PC-3 (cell line): ENCODE measurements at regions of chr4 and their contacts with region 1.

Region 1: GRCh38 chr4:39697740-39698423 is at the start of gene UBE2K:
- DNase-seq: peak; percentile 87
- ATAC-seq: peak; percentile 95
- H3K4me3 ChIP-seq: peak within 1 kb of the TSS; percentile 99
- H3K27ac ChIP-seq: peak within 1 kb of the TSS; percentile 83
- H3K4me1 ChIP-seq: peaks cover 13% of the 10 kb centered on the region
- H3K27me3 ChIP-seq: no peaks in the 10 kb centered on the region
- CTCF ChIP-seq: no peak
- total RNA-seq, gene UBE2K: 30.1 and 38.9 TPM in 2 replicates

Region 2: DNA sequence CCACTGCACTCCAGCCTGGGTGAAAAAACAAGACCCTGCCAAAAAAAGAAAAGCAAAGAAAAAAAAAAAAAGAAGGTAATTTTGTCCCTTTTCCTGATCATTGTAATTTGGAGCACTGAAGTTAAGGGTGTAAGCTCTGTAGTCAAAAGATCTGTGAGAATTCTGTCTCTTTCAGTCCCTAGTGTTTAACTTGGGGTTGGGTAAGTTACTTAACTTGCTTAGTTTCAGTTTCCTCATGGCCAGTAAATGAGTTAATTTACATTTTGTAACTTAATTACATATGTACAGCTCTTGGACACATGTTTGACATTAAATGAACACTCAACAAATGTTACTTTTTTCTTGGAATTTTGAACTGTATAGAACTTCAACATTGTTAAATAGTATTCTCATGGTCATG is 10.9 kb before region 1 on chr4:
- CTCF ChIA-PET with region 1: no interaction called
- POLR2A ChIA-PET with region 1: interaction called, 17 read pairs
- intact Hi-C with region 1: no loop called
- DNase-seq: no peak
- ATAC-seq: no peak
- H3K4me3 ChIP-seq: no peak overlapping the region
- H3K27ac ChIP-seq: no peak overlapping the region
- H3K4me1 ChIP-seq: no peaks in the 10 kb centered on the region
- H3K27me3 ChIP-seq: no peaks in the 10 kb centered on the region
- CTCF ChIP-seq: no peak

Region 3: GRCh38 chr4:39763714-39764572 is 66.1 kb after region 1 on chr4:
- CTCF ChIA-PET with region 1: no interaction called
- POLR2A ChIA-PET with region 1: interaction called, 13 read pairs
- intact Hi-C with region 1: no loop called
- DNase-seq: no peak
- ATAC-seq: no peak
- H3K4me3 ChIP-seq: no peak overlapping the region
- H3K27ac ChIP-seq: no peak overlapping the region
- H3K4me1 ChIP-seq: no peaks in the 10 kb centered on the region
- H3K27me3 ChIP-seq: no peaks in the 10 kb centered on the region
- CTCF ChIP-seq: no peak

Region 4: GRCh38 chr4:39823191-39823590 is 125.3 kb after region 1 on chr4:
- CTCF ChIA-PET with region 1: no interaction called
- POLR2A ChIA-PET with region 1: no interaction called
- intact Hi-C with region 1: loop called (anchors 10 kb)
- DNase-seq: no peak
- ATAC-seq: no peak
- H3K4me3 ChIP-seq: no peak overlapping the region
- H3K27ac ChIP-seq: no peak overlapping the region
- H3K4me1 ChIP-seq: peaks cover 17% of the 10 kb centered on the region
- H3K27me3 ChIP-seq: no peaks in the 10 kb centered on the region
- CTCF ChIP-seq: no peak

Region 5: DNA sequence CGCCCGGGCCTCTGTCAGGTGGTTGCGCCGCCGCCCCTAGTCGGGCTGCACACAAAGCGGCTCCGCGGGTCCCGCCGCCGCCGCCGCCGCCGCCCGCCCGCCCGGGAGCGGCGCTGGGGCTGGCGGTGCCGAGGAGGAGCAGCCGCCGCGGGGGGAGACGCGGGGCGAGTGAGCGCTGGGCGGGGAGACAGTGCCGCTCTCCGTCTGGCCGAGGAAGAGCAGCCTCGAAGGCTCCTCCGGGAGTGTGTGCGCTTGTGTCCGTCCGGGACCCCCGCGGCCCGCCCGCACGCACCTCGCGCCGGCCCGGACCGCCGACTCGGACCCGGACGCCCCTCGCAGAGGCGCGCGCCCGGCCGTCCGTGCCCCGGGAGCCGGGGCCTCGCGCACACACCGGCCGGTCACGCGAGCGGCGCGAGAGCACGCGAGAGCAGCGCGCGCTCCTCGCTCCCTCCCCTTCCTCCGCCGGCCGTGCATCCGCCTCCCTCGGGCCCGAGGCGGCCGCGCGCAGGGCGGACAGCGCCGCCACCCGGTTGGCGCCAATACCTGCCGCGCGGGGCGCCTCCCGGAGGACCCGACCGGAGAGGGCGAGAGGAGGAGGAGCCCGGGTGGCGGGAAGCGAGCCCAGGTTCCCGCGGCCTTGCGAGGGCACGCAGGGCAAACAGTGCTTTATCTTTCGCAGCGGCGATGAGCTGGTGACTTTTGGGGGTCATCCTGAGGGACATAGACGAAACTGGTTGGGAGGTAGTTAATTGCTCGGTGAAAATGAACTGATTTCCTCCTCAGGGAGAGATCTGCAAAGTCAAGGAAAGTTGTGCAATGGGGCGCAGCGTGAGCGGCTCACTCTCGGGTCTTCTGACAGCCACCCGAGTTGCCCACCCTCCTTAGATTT is 279.9 kb after region 1 on chr4 and contains the start of gene PDS5A:
- CTCF ChIA-PET with region 1: no interaction called
- POLR2A ChIA-PET with region 1: no interaction called
- intact Hi-C with region 1: loop called (anchors 5 kb)
- DNase-seq: peak; percentile 91
- ATAC-seq: peak; percentile 78
- H3K4me3 ChIP-seq: peak within 1 kb of the TSS; percentile 96
- H3K27ac ChIP-seq: peak within 1 kb of the TSS; percentile 34
- H3K4me1 ChIP-seq: peaks cover 12% of the 10 kb centered on the region
- H3K27me3 ChIP-seq: no peaks in the 10 kb centered on the region
- CTCF ChIP-seq: peak; percentile 70
- total RNA-seq, gene PDS5A: 39.9 and 49.8 TPM in 2 replicates

Region 6: GRCh38 chr4:40056716-40057585 is 359.1 kb after region 1 on chr4 and contains the start of gene N4BP2:
- CTCF ChIA-PET with region 1: no interaction called
- POLR2A ChIA-PET with region 1: no interaction called
- intact Hi-C with region 1: loop called (anchors 5 kb)
- DNase-seq: peak; percentile 68
- ATAC-seq: peak; percentile 55
- H3K4me3 ChIP-seq: peak within 1 kb of the TSS; percentile 81
- H3K27ac ChIP-seq: peak within 1 kb of the TSS; percentile 88
- H3K4me1 ChIP-seq: peaks cover 17% of the 10 kb centered on the region
- H3K27me3 ChIP-seq: no peaks in the 10 kb centered on the region
- CTCF ChIP-seq: peak; percentile 52
- total RNA-seq, gene N4BP2: 3.4 and 3.9 TPM in 2 replicates